Activated CD4-positive, alpha-beta memory T cell treated with anti-CD3 and anti-CD28 coated beads, Interleukin-2, amount 10 ng/mL, durations not matched to agents 7 days and 5 days (primary cell): ENCODE measurements at regions of chr22 and their contacts with region 1.

Region 1: GRCh38 chr22:40922484-40923303 is 28.5 kb upstream of the RBX1 start:
- DNase-seq: no peak
- H3K4me3 Mint-ChIP-seq: no peak overlapping the region
- H3K27ac Mint-ChIP-seq: peak overlapping the region; percentile 31
- H3K4me1 Mint-ChIP-seq: peaks cover 4% of the 10 kb centered on the region
- H3K27me3 Mint-ChIP-seq: no peaks in the 10 kb centered on the region

Region 2: GRCh38 chr22:40911772-40912171 is 10.9 kb before region 1 on chr22:
- CTCF ChIA-PET with region 1: interaction called, 15 read pairs
- POLR2A ChIA-PET with region 1: no interaction called
- DNase-seq: no peak
- H3K4me3 Mint-ChIP-seq: no peak overlapping the region
- H3K27ac Mint-ChIP-seq: no peak overlapping the region
- H3K4me1 Mint-ChIP-seq: no peaks in the 10 kb centered on the region
- H3K27me3 Mint-ChIP-seq: no peaks in the 10 kb centered on the region

Region 3: DNA sequence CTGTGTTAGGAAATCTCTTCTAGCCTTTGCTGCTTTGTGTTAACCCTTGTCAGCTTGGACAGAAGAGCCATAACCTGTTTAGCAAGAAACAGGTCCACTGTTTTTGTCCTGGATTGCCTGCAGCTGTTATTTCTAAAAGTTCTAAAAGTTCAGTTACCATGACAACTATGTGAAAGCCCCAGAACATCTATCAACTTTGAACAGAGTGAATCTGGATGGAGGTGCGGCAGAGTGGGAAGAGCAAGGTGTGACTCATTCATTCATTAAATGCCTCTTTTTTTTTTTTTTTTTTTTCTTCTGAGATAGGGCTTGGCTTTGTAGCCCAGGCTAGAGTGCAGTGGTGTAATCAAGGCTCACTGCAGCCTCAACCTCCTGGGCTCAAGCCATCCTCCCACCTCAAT is 79.0 kb after region 1 on chr22:
- CTCF ChIA-PET with region 1: no interaction called
- POLR2A ChIA-PET with region 1: no interaction called
- DNase-seq: no peak
- H3K4me3 Mint-ChIP-seq: no peak overlapping the region
- H3K27ac Mint-ChIP-seq: no peak overlapping the region
- H3K4me1 Mint-ChIP-seq: no peaks in the 10 kb centered on the region
- H3K27me3 Mint-ChIP-seq: peaks cover 8% of the 10 kb centered on the region

Region 4: GRCh38 chr22:41197038-41197972 is 274.6 kb after region 1 on chr22:
- CTCF ChIA-PET with region 1: interaction called, 13 read pairs
- POLR2A ChIA-PET with region 1: no interaction called
- DNase-seq: peak; percentile 81
- H3K4me3 Mint-ChIP-seq: peak overlapping the region; percentile 83
- H3K27ac Mint-ChIP-seq: no peak overlapping the region
- H3K4me1 Mint-ChIP-seq: peaks cover 14% of the 10 kb centered on the region
- H3K27me3 Mint-ChIP-seq: peaks cover 26% of the 10 kb centered on the region